GM10248 (cell line): ENCODE measurements at regions of chr13 and their contacts with region 1.

Region 1: DNA sequence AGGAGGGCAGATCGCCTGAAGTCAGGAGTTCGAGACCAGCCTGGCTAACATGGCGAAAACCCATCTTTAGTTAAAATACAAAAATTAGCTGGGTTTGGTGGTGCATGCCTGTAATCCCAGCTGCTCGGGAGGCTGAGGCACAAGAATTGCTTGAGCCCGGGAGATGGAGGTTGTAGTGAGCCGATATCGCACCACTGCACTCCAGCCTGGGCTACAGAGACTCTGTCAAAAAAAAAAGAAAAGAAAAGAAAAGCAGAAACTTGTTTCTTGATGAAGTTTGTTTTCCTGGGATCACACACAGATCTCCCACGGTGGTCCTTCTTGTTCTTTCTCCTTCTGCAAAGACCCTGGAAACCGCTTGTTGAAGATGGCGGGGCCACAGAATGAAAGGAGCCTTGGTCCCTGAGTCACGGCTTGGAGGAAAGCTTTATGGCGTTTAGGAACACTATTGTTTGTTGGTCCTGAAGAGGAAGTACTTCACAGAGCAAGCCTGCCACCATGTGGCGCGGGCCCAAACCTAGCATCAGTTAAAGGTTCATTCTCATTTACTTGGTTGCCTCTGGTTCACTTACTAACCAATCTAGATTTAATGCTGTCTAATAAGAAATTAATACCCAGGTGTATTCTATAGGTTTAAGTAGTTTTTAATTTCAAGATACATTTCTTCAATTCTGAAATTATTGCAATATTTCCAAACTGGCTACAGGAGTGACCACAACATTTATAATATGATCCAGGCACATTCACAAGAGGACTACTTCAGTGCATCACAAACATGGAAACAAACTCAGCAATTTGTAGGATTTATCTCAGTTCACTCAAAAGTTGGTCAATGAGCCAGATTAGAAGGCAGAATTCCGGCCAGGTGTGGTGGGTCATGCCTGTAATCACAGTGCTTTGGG is 21.3 kb upstream of the ARL11 start:
- DNase-seq: peak; percentile 77
- CTCF ChIP-seq: peak; percentile 84

Region 2: DNA sequence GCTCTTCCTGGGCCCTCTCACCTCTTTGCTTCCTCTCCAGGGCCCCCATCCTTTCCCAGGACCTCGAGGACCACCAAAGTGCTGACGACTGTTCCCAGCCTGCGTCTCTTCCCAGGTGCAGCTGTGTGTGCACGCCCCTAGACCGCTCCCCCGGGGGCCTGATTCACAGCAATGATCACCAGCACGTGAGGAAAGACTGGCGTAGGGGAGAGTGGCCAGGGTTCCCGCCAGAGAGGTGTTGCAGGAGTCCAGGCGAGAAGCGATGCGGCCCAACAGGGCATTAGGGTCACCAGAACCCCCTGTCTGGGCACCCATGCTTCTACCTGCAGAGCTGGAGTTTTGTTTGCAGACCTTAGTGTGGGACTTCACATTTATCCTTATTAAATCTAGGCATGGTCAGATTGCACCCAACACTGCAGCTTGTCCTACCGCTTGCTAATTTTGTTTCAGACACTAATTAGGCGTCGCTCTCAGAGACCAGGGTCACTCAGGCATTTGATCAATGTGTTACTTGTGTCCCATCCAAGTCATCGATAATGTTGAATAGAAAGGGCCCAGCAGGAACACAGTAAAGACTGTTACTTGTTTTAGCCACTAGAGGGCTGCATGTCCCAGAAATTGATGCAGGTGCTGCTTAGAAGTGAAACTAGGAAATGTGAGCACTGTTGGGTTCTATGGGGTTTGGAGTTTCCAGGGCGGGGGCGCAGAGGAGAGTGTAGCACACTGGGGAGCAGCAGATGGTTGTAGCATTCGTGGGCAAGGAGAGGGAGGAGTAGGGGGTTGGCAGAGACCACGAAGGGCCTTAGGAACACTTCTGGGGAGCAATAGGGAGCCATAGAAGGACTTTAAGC is 306.0 kb before region 1 on chr13:
- CTCF ChIA-PET with region 1: interaction called, 51 read pairs
- POLR2A ChIA-PET with region 1: no interaction called
- DNase-seq: peak; percentile 87
- CTCF ChIP-seq: peak; percentile 86

Region 3: DNA sequence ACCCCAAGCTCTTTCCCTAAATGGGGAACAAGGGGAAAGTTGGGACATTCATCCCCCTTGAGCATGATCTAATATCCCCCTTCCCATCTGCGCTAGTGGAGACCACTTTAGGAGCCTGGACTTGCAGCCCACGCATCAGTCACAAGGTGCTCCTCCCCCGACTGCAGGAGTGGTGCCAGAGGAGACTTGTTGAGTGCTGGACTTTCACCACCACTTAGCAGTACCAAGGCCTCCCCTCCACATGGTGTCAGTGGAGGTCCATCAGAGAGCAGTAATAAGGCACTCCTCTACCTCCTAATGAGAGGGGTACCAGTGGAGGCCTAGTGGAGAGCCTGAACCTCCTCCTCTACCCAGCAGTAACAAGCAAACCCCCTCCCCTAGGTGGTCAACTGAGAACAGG is 185.6 kb before region 1 on chr13:
- CTCF ChIA-PET with region 1: interaction called, 16 read pairs
- POLR2A ChIA-PET with region 1: no interaction called
- DNase-seq: peak; percentile 37
- CTCF ChIP-seq: peak; percentile 46

Region 4: GRCh38 chr13:49517461-49517860 is 89.5 kb before region 1 on chr13:
- CTCF ChIA-PET with region 1: no interaction called
- POLR2A ChIA-PET with region 1: no interaction called
- DNase-seq: no peak
- CTCF ChIP-seq: no peak

Region 5: GRCh38 chr13:49585220-49586157 is 21.5 kb before region 1 on chr13 and contains the start of gene RCBTB1:
- CTCF ChIA-PET with region 1: interaction called, 17 read pairs
- POLR2A ChIA-PET with region 1: no interaction called
- DNase-seq: peak; percentile 95
- CTCF ChIP-seq: no peak

Region 6: GRCh38 chr13:49620170-49620621 is 13.2 kb after region 1 on chr13:
- CTCF ChIA-PET with region 1: interaction called, 11 read pairs
- POLR2A ChIA-PET with region 1: no interaction called
- DNase-seq: peak; percentile 73
- CTCF ChIP-seq: no peak